Activated CD4-positive, alpha-beta T cell treated with anti-CD3 and anti-CD28 coated beads, Interleukin-2, amount 10 ng/mL, durations not matched to agents 24 days and 14 days (primary cell): ENCODE measurements at regions of chr20 and their contacts with region 1.

Region 1: DNA sequence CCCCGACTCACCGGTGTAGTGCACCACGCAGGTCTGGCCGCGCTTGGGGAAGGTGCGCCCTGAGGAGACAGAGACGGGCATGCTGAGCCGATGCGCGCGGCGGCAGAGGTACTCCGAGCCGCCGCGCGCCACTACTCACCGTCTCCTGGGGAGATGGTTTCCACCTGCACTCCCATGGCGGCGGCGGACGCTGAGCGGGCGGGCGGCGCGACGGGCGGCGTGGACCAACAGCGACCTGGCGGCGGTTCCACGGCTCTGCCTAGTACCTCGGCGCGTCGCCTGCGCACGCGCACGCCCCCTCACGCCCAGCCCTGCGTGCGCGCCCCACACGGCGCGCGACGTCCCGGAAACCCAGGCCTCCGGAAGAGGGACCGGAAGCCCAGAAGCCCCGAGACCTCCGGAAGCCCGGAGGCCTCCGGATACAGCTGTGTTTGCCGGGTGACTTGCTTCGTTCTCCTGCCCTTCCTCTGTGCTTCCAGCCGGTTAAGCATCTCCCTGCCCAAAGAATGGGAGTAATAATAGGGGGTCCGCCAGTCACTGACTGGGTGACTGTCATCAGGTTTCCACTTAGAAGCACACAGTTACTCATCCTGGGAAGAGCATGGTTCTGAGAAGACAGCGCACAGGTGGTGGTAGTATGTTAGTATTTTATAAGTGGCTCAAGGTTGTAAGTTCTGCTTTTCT is at the start of gene FKBP1A:
- DNase-seq: peak; percentile 97
- H3K4me3 Mint-ChIP-seq: peak within 1 kb of the TSS; percentile 79
- H3K27ac Mint-ChIP-seq: peak within 1 kb of the TSS; percentile 90
- H3K4me1 Mint-ChIP-seq: peaks cover 51% of the 10 kb centered on the region
- H3K27me3 Mint-ChIP-seq: peaks cover 3% of the 10 kb centered on the region
- total RNA-seq, gene FKBP1A: 291 and 292 TPM in 2 replicates

Region 2: GRCh38 chr20:1225783-1226654 is 166.9 kb before region 1 on chr20 and contains the start of gene RAD21L1:
- intact Hi-C with region 1: loop called (anchors 5 kb)
- DNase-seq: peak; percentile 88
- H3K4me3 Mint-ChIP-seq: peak within 1 kb of the TSS; percentile 86
- H3K27ac Mint-ChIP-seq: peak within 1 kb of the TSS; percentile 11
- H3K4me1 Mint-ChIP-seq: peaks cover 16% of the 10 kb centered on the region
- H3K27me3 Mint-ChIP-seq: peaks cover 50% of the 10 kb centered on the region
- total RNA-seq, gene RAD21L1: not detected in 2 replicates

Region 3: GRCh38 chr20:1357921-1358671 is 34.9 kb before region 1 on chr20:
- intact Hi-C with region 1: loop called (anchors 1 kb)
- DNase-seq: peak; percentile 86
- H3K4me3 Mint-ChIP-seq: peak overlapping the region; percentile 69
- H3K27ac Mint-ChIP-seq: peak overlapping the region; percentile 83
- H3K4me1 Mint-ChIP-seq: peaks cover 51% of the 10 kb centered on the region
- H3K27me3 Mint-ChIP-seq: no peaks in the 10 kb centered on the region

Region 4: GRCh38 chr20:1375515-1375914 is 17.4 kb before region 1 on chr20:
- intact Hi-C with region 1: loop called (anchors 1 kb)
- DNase-seq: no peak
- H3K4me3 Mint-ChIP-seq: no peak overlapping the region
- H3K27ac Mint-ChIP-seq: peak overlapping the region; percentile 61
- H3K4me1 Mint-ChIP-seq: peaks cover 79% of the 10 kb centered on the region
- H3K27me3 Mint-ChIP-seq: no peaks in the 10 kb centered on the region

Region 5: DNA sequence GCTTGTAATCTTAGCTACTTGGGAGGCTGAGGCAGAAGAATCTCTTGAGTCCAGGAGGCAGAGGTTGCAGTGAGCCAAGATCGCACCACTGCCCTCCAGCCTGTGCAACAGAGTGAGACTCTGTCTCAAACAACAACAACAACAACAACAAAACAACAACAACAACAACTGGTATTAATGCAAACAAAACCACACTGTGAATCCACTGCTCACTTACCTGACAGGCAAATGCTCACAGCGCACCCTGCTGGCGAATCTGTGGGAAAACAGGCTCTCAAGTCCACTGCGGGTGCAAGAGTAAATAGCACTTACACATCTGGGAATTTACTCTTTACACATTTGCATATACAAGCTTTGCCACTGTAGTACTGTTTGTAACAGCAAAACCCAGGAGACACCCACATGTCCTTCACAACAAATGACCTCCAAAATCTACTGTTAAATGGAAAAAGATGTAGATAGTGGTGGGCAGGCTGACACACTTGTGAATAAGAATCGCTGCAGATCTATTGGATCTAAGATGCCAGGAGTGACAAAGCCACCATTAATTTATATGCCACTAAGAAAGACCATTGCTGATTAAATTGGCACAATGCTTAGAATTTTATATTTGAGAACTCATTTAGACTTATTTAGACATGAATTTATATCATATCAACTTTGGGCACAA is 44.4 kb after region 1 on chr20:
- intact Hi-C with region 1: loop called (anchors 1 kb)
- DNase-seq: peak; percentile 93
- H3K4me3 Mint-ChIP-seq: peak overlapping the region; percentile 19
- H3K27ac Mint-ChIP-seq: peak overlapping the region; percentile 52
- H3K4me1 Mint-ChIP-seq: peaks cover 26% of the 10 kb centered on the region
- H3K27me3 Mint-ChIP-seq: peaks cover 4% of the 10 kb centered on the region